Dorsolateral prefrontal cortex (tissue), 120 donors: ENCODE measurements at regions of chr16 and their contacts with region 1.

Region 1: DNA sequence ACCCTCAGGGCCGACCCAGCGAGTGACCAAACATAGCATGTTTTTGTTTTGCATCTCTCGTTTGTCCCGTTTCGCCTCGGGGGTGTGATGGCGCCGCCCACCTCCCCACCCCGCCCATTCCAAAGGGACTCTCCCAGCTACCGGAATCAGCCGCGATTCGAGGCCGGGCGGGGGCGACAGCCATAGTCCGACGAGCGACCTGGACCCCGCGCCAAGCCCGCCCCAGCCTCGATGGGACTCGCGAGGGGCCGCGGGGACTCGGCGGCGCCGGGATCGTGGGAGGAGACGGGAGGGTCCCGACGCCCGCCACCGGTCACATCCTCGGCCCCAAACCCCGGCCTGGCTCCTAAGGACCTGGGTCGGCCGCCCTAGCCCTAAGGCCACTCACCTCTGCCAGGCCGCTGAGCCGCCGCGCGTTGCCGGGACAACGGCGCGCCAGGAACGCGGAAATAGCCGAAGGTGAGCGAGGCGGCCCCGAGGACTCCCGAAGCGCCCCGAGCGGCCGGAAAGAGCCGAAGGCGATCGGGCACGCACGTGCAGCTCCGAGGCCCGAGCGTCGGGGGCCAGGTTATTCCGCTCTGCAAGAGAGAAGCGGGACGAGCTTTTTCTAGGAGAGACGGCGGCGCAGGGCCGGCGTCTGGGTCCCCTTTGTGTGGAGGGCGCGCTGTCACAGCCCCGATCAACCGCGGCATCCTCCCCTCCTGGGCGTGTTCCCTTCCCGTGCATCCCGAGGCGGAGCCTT is 1.4 kb downstream of the IFT140 start:
- DNase-seq: peak; percentile 55 to 89 (median 66)
- H3K4me3 ChIP-seq: peak overlapping the region; percentile 72 to 99 (median 91)
- H3K27ac ChIP-seq: peak overlapping the region in 57 of 59 donors; percentile 23 to 91 (median 77)
- H3K27me3 ChIP-seq: no peaks in the 10 kb centered on the region
- CTCF ChIP-seq: peak in 14 of 56 donors; percentile 4 to 29 (median 14)

Region 2: DNA sequence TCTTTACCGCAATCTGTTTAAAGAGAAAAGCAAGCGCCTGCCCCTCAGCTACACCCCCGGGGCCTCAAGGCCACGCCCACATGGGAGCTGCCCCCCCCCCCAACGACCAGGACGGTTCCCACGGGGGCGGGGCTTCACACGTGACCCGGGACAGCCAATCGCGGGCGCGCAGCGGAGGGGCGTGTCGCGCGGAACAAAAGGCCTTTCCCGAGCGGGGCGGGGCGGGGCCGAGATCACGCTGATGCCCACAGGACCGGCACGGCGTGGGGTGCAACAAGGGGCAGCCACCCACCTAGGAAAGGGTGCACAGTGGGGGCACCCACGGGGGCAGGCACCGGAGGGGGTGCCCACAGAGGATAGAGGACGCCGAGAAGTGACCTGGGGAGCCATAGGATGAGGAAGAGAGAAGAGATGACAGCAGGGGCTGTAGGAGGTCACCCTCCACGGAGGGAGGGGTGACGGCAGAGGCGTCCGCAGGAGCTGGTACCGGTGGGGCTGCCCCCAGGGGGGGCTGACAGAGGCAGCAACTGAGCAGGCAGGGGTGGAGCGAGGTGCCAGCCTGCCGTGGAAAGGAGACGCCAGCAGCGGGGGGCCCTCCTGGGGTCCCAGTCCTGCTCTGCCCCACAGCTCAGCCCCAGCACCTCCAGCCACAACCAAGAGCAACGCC is 202.1 kb before region 1 on chr16:
- intact Hi-C with region 1: loop called in 1 of 2 experiments (anchors 5 kb)
- DNase-seq: peak; percentile 86 to 98 (median 95)
- H3K4me3 ChIP-seq: peak overlapping the region; percentile 41 to 89 (median 68)
- H3K27ac ChIP-seq: peak overlapping the region in 57 of 59 donors; percentile 4 to 91 (median 80)
- H3K27me3 ChIP-seq: no peaks in the 10 kb centered on the region
- CTCF ChIP-seq: peak in 3 of 56 donors; percentile 11 to 18 (median 13)

Region 3: DNA sequence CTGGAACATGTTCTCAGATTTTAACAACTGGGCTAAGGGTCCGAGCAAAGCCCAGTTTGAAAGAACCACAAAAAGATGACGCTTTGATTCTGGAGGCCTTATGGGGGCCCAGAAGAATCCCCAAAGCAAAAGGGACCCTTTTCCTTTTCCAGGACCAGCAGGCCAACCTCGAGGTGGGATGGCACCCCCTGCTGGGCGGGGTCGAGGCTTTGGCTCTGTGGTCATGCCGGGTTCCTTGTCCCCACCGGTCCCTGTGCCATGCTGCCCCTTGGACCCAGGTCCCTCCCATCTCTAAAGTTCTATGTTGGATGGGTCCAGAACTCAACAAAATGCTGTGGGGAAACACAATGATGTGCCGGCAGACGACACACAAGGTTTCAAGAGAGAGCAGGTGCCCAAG is 46.1 kb before region 1 on chr16:
- intact Hi-C with region 1: no loop called
- DNase-seq: no peak
- H3K4me3 ChIP-seq: no peak overlapping the region
- H3K27ac ChIP-seq: peak overlapping the region in 1 of 59 donors; percentile 92
- H3K27me3 ChIP-seq: no peaks in the 10 kb centered on the region
- CTCF ChIP-seq: no peak

Region 4: DNA sequence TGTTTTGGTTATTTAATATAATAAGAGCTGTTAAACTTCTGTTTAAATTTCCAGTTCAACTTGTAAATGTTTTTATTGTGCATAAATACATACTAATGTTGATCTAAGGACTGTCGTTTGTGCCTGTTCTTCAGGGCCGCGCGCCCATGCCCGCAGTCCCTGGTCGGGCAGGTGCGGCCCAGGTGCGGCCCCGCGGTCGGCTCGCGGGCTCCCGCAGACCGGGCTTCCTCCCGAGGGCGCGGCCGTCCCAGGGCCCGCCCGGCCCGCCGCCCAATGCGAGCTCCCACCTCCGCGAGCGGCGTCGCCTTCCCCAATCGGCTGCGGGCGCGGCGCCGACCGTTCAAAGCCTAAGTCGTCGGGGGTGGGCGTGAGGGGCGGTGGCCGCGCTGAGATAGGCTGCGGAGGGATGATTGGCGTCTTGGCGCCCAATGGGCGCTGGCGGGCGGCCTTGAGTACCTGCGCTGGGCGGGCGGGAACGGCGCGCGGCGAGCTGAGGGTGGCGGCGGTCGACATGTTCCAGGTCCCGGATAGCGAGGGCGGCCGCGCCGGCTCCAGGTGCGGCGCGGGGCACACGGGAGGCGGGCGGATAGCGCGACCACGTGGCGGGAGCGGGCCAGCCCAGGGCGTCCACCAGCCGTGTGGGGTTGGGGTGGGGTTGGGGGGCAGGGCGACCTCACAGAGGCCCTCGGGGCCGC is 67.5 kb after region 1 on chr16 and contains the start of gene JPT2:
- intact Hi-C with region 1: loop called in 1 of 2 experiments (anchors 10 kb)
- DNase-seq: peak; percentile 90 to 98 (median 95)
- H3K4me3 ChIP-seq: peak within 1 kb of the TSS; percentile 40 to 88 (median 72)
- H3K27ac ChIP-seq: peak within 1 kb of the TSS in 36 of 59 donors; percentile 7 to 82 (median 42)
- H3K27me3 ChIP-seq: no peaks in the 10 kb centered on the region
- CTCF ChIP-seq: peak in 19 of 56 donors; percentile 6 to 37 (median 17)
- total RNA-seq, gene JPT2: 7.1 to 57.9 (median 18.9) TPM

Region 5: GRCh38 chr16:1772736-1773584 is 162.5 kb after region 1 on chr16 and contains the starts of genes EME2 and MRPS34:
- intact Hi-C with region 1: loop called (anchors 2 to 5 kb)
- DNase-seq: peak; percentile 47 to 89 (median 78)
- H3K4me3 ChIP-seq: peak within 1 kb of the TSS; percentile 77 to 100 (median 95)
- H3K27ac ChIP-seq: peak within 1 kb of the TSS; percentile 81 to 99 (median 95)
- H3K27me3 ChIP-seq: no peaks in the 10 kb centered on the region
- CTCF ChIP-seq: peak; percentile 37 to 83 (median 68)
- total RNA-seq, gene EME2: 12.6 to 44.4 (median 21.7) TPM
- total RNA-seq, gene MRPS34: 37.4 to 77.9 (median 58.6) TPM

Region 6: DNA sequence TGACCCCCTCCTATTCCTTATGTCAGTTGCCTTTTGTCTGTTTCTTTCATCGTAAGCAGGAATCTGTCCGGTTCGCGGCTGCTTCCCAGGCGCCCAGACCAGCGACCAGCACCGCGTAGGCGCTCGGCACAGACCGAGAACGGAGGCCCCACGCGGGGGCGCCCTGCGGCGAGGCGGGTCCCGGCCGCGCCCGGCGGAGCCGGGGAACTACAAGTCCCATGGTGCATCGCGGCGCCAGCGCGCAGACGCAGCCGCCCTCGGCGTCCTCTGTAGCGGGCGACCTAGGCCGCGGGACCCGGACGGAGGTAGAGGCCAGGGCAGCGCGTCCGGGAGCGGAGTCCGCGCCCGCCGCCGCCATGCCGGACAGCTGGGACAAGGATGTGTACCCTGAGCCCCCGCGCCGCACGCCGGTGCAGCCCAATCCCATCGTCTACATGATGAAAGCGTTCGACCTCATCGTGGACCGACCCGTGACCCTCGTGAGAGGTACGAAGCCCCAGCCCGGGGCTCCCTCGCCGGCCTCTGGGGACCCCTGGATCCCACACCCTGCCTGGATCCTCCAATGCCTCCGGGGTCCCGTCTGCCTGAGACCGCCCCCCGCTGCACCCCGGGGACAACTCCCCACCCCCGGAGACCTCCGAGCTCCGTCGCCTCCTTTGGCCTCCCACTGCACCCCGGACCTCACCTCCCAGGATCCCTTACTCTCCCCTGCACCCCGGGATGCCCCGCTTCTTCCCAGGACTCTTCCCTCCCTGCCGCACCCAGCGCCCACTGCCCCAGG is 349.0 kb after region 1 on chr16 and contains the start of gene NDUFB10:
- intact Hi-C with region 1: loop called in 1 of 2 experiments (anchors 10 kb)
- DNase-seq: peak; percentile 79 to 97 (median 89)
- H3K4me3 ChIP-seq: peak within 1 kb of the TSS; percentile 63 to 100 (median 95)
- H3K27ac ChIP-seq: peak within 1 kb of the TSS; percentile 57 to 97 (median 90)
- H3K27me3 ChIP-seq: no peaks in the 10 kb centered on the region
- CTCF ChIP-seq: peak; percentile 52 to 97 (median 88)
- total RNA-seq, gene NDUFB10: 74.8 to 178 (median 131) TPM